OCI-LY7 (cell line): ENCODE measurements at regions of chrX and their contacts with region 1.

Region 1: DNA sequence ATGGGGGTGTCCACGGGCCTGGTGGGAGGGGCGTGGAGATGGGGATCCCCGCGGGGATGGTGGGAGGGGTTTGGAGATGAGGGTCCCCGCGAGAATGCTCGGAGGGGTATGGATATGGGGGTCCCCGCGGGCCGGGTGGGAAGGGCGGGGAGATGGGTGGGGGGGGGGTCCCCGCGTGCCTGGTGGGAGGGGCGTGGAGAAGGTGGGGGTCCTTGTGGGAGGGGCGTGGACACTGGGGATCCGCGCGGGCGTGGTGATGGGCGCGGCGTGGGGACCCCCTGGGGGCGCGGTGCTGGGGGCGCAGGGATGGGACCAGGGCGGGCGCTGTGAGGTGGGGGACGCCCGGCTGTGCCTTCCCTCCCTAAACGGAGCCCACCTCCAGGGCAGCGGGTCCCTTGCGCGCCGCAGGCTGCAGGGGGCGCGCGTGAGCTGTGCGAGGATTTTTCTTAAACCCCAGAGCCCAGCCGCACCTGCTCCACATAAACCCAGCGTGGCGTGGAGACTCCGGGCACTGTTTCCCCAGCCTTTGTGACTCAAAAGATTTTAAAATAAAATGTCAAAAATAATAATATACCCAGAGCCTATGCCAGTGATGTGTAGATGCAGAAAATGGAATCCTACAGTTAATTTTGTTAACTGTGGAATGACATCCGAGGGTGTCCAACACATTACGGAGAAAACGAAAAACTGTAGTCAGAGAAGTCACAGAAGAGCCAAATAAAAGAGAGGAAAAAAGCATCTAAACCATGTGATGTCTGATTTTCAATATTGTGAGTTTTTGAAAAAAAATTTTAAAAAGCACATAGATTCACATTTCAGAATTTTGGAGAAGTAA is 1.5 kb upstream of the ASMTL start:
- DNase-seq: peak; percentile 91
- H3K4me3 ChIP-seq: peak overlapping the region; percentile 68
- H3K27ac ChIP-seq: peak overlapping the region; percentile 58
- H3K4me1 ChIP-seq: peaks cover 49% of the 10 kb centered on the region
- CTCF ChIP-seq: peak; percentile 93

Region 2: GRCh38 chrX:1391707-1392375 is 62.3 kb before region 1 on chrX and contains the start of gene SLC25A6:
- CTCF ChIA-PET with region 1: no interaction called
- POLR2A ChIA-PET with region 1: no interaction called
- intact Hi-C with region 1: loop called (anchors 2 kb)
- DNase-seq: peak; percentile 99
- H3K4me3 ChIP-seq: peak within 1 kb of the TSS; percentile 99
- H3K27ac ChIP-seq: peak within 1 kb of the TSS; percentile 90
- H3K4me1 ChIP-seq: peaks cover 29% of the 10 kb centered on the region
- CTCF ChIP-seq: 0 out of 2 replicates have a peak, but pooled peaks have one; percentile 13
- total RNA-seq, gene SLC25A6: 196 and 211 TPM in 2 replicates

Region 3: DNA sequence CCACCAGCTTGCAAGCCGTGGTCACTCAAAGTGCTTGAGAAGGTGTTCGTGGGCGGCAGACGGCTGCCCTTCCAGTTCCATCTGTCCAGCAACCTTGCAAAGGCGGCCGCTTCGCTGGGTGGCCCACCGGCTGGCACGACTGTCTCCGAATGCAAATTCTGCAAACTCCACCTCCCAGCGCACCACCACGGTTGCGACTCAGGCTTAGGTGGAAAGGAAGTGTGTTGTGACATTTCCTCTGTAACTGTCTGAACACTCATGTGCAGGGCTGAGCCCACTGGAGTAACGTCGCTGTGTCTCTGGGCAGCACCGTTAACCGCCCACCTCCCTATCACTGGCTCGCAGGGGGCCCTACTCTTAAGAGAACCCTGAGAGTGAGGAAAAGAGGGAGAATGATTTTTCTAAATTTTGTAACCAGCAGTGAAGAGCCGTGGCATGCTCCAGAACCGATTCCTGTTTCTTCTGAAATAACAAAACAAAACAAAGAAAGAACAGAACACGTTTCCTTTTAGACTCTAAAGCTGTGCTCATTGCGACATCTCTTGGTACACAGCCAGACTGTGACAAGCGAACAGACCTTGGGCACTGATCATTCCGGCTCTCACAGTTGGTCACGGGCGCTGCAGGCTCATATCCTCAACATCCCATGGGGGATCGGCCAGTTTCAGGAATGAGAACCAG is 83.0 kb after region 1 on chrX and contains the start of gene P2RY8:
- CTCF ChIA-PET with region 1: no interaction called
- POLR2A ChIA-PET with region 1: no interaction called
- intact Hi-C with region 1: loop called (anchors 1 kb)
- DNase-seq: peak; percentile 91
- H3K4me3 ChIP-seq: peak within 1 kb of the TSS; percentile 87
- H3K27ac ChIP-seq: peak within 1 kb of the TSS; percentile 94
- H3K4me1 ChIP-seq: peaks cover 18% of the 10 kb centered on the region
- CTCF ChIP-seq: peak; percentile 78
- total RNA-seq, gene P2RY8: 88.3 and 110 TPM in 2 replicates

Region 4: GRCh38 chrX:1649621-1650020 is 195.5 kb after region 1 on chrX:
- CTCF ChIA-PET with region 1: no interaction called
- POLR2A ChIA-PET with region 1: no interaction called
- intact Hi-C with region 1: loop called (anchors 1 kb)
- DNase-seq: no peak
- H3K4me3 ChIP-seq: no peak overlapping the region
- H3K27ac ChIP-seq: no peak overlapping the region
- H3K4me1 ChIP-seq: peaks cover 9% of the 10 kb centered on the region
- CTCF ChIP-seq: no peak

Region 5: DNA sequence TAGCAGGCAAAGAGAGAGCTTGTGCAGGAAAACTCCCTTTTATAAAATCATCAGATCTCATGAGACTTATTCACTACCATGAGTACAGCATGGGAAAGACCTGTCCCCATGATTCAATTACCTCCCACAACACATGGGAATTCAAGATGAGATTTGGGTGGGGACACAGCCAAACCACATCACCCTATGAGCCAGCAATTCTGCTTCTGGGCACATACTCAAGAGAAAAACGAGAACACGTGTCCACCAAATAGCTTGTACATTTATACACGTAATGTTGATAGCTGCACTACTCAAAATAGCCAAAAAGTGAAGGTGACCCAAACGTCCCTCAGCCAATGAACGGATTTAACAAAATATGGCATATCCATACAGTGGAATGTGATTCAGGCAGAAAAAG is 1141.1 kb after region 1 on chrX:
- CTCF ChIA-PET with region 1: no interaction called
- POLR2A ChIA-PET with region 1: no interaction called
- intact Hi-C with region 1: loop called (anchors 1 kb)
- DNase-seq: no peak
- H3K4me3 ChIP-seq: no peak overlapping the region
- H3K27ac ChIP-seq: no peak overlapping the region
- H3K4me1 ChIP-seq: peaks cover 17% of the 10 kb centered on the region
- CTCF ChIP-seq: no peak

Region 6: GRCh38 chrX:2627272-2627867 is 1173.2 kb after region 1 on chrX:
- CTCF ChIA-PET with region 1: no interaction called
- POLR2A ChIA-PET with region 1: no interaction called
- intact Hi-C with region 1: loop called (anchors 2 kb)
- DNase-seq: peak; percentile 85
- H3K4me3 ChIP-seq: no peak overlapping the region
- H3K27ac ChIP-seq: peak overlapping the region; percentile 90
- H3K4me1 ChIP-seq: peaks cover 38% of the 10 kb centered on the region
- CTCF ChIP-seq: peak; percentile 96